Heart right ventricle (tissue), 16 donors: ENCODE measurements at regions of chr10 and their contacts with region 1.

Region 1: GRCh38 chr10:61662794-61663259 is at the start of gene CABCOCO1:
- DNase-seq: peak; percentile 53 to 75
- ATAC-seq: peak; percentile 87 to 99 (median 96)
- H3K4me3 ChIP-seq: peak within 1 kb of the TSS; percentile 32 to 68 (median 60)
- H3K27ac ChIP-seq: peak within 1 kb of the TSS in 9 of 10 donors; percentile 34 to 69 (median 56)
- H3K4me1 ChIP-seq: peaks cover 0 to 21% (median 4%) of the 10 kb centered on the region in 9 donors
- H3K27me3 ChIP-seq: peaks cover 0 to 31% (median 0%) of the 10 kb centered on the region in 7 donors
- CTCF ChIP-seq: peak in 3 of 9 donors; percentile 35 to 44 (median 40)
- total RNA-seq, gene CABCOCO1: not detected

Region 2: GRCh38 chr10:61438141-61438994 is 224.5 kb before region 1 on chr10:
- intact Hi-C with region 1: loop called in 1 of 10 experiments (anchors 10 kb)
- DNase-seq: peak in 1 of 2 donors; percentile 13
- ATAC-seq: peak in 7 of 8 donors; percentile 35 to 86 (median 71)
- H3K4me3 ChIP-seq: no peak overlapping the region
- H3K27ac ChIP-seq: peak overlapping the region in 3 of 10 donors; percentile 2 to 53 (median 28)
- H3K4me1 ChIP-seq: peaks cover 0 to 20% (median 8%) of the 10 kb centered on the region in 9 donors
- H3K27me3 ChIP-seq: no peaks in the 10 kb centered on the region
- CTCF ChIP-seq: no peak

Region 3: DNA sequence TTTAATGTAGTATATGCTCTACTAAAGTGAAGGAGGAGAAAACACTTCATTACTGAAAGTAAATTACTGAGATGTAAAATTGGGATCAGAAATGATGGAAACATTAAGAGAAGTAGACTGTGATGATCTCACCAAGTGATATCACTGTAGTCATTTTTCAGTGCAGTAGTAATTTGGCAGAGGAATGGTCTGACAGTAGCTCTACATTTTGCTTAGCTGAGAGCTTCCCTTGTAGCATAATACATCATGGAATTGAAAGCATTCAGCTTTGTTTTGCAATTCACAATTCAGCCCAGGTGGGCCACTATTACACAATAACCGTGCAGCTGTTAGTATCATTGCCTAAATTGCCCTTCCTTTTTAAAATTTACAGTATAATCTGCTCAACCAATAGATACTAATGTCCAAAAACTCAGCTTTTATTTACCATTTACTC is 19.5 kb before region 1 on chr10:
- intact Hi-C with region 1: loop called in 1 of 10 experiments (anchors 2 kb)
- DNase-seq: no peak
- ATAC-seq: peak in 7 of 8 donors; percentile 38 to 63 (median 54)
- H3K4me3 ChIP-seq: no peak overlapping the region
- H3K27ac ChIP-seq: peak overlapping the region in 2 of 10 donors; percentile 13
- H3K4me1 ChIP-seq: peaks cover 0 to 17% (median 4%) of the 10 kb centered on the region in 9 donors
- H3K27me3 ChIP-seq: no peaks in the 10 kb centered on the region
- CTCF ChIP-seq: no peak

Region 4: GRCh38 chr10:61733358-61733940 is 70.6 kb after region 1 on chr10:
- intact Hi-C with region 1: no loop called
- DNase-seq: no peak
- ATAC-seq: no peak
- H3K4me3 ChIP-seq: no peak overlapping the region
- H3K27ac ChIP-seq: no peak overlapping the region
- H3K4me1 ChIP-seq: no peaks in the 10 kb centered on the region
- H3K27me3 ChIP-seq: no peaks in the 10 kb centered on the region
- CTCF ChIP-seq: peak; percentile 20 to 74 (median 60)